Activated T-helper 2 cell treated with anti-CD3 and anti-CD28 coated beads, Interferon-gamma antibody, Interleukin-2, Interleukin-4, amounts not matched to agents 10 μg/mL and 5 μg/mL and 100 μg/mL, durations not matched to agents 14 hours and 24 hours and 36 hours (primary cell): ENCODE measurements at regions of chr10 and their contacts with region 1.

Region 1: GRCh38 chr10:100743626-100744135 is 1.7 kb upstream of the PAX2 start:
- DNase-seq: no peak
- H3K4me3 Mint-ChIP-seq: no peak overlapping the region
- H3K27ac Mint-ChIP-seq: peak overlapping the region; percentile 6
- H3K4me1 Mint-ChIP-seq: peaks cover 9% of the 10 kb centered on the region
- H3K27me3 Mint-ChIP-seq: peaks cover 80% of the 10 kb centered on the region

Region 2: GRCh38 chr10:100562008-100562711 is 181.5 kb before region 1 on chr10:
- intact Hi-C with region 1: loop called (anchors 1 kb)
- DNase-seq: peak; percentile 73
- H3K4me3 Mint-ChIP-seq: no peak overlapping the region
- H3K27ac Mint-ChIP-seq: no peak overlapping the region
- H3K4me1 Mint-ChIP-seq: peaks cover 12% of the 10 kb centered on the region
- H3K27me3 Mint-ChIP-seq: peaks cover 36% of the 10 kb centered on the region

Region 3: DNA sequence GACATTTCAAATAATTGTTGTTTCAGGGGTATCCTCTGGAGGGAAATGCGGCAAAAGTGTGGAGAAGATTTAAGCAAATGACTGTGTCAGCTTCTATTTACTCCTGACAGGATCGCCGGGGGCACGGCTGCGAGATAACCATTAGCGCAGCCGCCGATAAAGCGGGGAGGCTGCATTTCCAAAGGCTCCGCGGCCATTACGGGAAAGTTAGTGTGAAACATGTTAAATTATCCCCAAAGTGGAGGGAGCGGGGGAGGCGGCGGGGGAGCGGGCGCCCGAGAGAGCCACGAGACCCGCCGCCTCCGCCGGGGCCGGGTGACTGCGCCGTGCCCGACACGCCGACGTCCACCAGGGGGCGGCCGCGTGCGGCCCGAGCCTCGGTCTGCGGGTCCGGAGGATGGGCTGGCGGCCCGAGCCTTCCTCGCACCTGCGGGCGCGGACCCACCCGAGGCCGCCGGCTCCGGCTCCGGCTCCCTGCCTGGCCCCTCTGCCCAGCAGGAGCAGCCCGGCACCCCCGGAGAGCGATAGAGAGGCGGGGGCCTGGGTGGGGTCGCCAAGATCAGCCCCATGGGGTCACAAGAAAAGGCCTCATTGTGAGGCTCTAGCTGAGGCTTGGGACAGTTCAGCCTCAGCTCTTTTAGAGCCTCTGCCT is 72.7 kb before region 1 on chr10:
- intact Hi-C with region 1: loop called (anchors 5 kb)
- DNase-seq: peak; percentile 54
- H3K4me3 Mint-ChIP-seq: peak overlapping the region; percentile 39
- H3K27ac Mint-ChIP-seq: no peak overlapping the region
- H3K4me1 Mint-ChIP-seq: peaks cover 3% of the 10 kb centered on the region
- H3K27me3 Mint-ChIP-seq: peaks cover 49% of the 10 kb centered on the region

Region 4: DNA sequence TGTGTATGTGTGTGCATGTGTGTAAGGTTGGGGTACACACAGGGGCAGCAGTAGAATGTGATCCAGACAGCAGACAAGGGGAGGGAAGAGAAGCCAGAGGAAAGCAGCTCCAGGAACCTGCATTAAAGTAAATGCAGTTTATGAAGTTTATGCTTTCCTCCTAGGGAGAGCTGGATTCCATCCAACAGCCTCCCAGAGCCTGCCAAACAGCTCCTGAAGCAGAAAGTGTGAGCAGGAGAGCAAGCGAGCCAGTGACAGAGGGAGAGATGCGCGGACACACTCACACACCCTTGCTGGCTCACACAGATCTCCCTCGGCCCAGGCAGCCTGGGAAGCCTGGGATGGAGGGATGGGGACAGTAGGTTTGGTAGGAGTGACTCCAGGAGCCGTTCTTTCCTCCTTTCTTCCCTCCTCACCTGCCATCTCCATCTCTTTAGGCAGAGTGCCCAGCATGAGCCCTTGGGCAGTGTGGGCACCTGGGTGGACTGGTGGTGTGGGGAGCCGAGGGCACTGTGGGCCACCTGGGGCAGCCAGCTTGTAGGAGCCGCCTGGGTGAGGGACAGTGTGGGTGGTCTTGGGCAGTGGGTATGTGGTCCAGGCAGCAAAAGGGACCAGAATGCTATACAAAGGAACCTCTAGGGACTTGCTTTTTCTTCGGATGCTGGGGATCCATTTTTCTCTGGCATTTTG is 47.8 kb after region 1 on chr10:
- intact Hi-C with region 1: no loop called
- DNase-seq: no peak
- H3K4me3 Mint-ChIP-seq: no peak overlapping the region
- H3K27ac Mint-ChIP-seq: no peak overlapping the region
- H3K4me1 Mint-ChIP-seq: no peaks in the 10 kb centered on the region
- H3K27me3 Mint-ChIP-seq: peaks cover 57% of the 10 kb centered on the region

Region 5: DNA sequence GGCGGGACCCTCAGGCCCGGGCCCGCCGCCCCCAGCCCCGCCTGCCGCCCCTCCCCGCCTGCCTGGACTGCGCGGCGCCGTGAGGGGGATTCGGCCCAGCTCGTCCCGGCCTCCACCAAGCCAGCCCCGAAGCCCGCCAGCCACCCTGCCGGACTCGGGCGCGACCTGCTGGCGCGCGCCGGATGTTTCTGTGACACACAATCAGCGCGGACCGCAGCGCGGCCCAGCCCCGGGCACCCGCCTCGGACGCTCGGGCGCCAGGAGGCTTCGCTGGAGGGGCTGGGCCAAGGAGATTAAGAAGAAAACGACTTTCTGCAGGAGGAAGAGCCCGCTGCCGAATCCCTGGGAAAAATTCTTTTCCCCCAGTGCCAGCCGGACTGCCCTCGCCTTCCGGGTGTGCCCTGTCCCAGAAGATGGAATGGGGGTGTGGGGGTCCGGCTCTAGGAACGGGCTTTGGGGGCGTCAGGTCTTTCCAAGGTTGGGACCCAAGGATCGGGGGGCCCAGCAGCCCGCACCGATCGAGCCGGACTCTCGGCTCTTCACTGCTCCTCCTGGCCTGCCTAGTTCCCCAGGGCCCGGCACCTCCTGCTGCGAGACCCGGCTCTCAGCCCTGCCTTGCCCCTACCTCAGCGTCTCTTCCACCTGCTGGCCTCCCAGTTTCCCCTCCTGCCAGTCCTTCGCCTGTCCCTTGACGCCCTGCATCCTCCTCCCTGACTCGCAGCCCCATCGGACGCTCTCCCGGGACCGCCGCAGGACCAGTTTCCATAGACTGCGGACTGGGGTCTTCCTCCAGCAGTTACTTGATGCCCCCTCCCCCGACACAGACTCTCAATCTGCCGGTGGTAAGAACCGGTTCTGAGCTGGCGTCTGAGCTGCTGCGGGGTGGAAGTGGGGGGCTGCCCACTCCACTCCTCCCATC is 84.4 kb after region 1 on chr10:
- intact Hi-C with region 1: loop called (anchors 5 kb)
- DNase-seq: no peak
- H3K4me3 Mint-ChIP-seq: peak overlapping the region; percentile 75
- H3K27ac Mint-ChIP-seq: peak overlapping the region; percentile 5
- H3K4me1 Mint-ChIP-seq: peaks cover 21% of the 10 kb centered on the region
- H3K27me3 Mint-ChIP-seq: peaks cover 75% of the 10 kb centered on the region

Region 6: GRCh38 chr10:100979791-100980272 is 236.2 kb after region 1 on chr10:
- intact Hi-C with region 1: no loop called
- DNase-seq: no peak
- H3K4me3 Mint-ChIP-seq: no peak overlapping the region
- H3K27ac Mint-ChIP-seq: no peak overlapping the region
- H3K4me1 Mint-ChIP-seq: no peaks in the 10 kb centered on the region
- H3K27me3 Mint-ChIP-seq: no peaks in the 10 kb centered on the region

Region 7: DNA sequence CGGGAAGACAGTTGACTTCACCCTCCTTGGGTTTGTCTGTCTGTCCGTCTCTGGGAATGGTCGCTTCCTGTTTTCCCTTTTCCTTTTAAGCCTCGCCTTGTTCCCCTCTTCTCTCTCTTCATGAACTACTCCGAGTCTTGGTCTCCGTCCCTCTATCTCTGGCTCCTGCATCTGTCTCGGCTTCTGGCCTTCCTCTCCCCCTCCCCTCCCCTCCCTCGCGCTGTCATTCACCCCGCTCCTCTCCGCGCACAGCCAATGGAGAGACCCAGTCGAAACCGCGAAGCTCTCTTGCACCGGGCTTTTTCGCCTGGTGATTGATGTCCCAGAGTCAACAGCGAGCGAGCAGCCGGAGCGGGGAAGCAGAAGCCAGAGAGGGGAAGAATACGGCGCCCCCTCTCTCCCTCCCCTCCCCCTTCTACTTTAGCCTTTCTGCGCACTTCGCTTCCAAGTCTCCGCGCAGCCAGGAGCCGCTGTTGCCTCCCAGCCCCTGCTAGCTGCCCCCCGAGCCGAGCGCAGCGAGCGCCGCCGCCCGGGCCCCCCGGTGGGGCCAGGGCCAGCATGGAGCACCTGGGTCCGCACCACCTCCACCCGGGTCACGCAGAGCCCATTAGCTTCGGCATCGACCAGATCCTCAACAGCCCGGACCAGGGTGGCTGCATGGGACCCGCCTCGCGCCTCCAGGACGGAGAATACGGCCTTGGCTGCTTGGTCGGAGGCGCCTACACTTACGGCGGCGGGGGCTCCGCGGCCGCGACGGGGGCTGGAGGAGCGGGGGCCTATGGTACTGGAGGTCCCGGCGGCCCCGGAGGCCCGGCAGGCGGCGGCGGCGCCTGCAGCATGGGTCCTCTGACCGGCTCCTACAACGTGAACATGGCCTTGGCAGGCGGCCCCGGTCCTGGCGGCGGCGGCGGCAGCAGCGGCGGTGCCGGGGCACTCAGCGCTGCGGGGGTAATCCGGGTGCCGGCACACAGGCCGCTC is 387.6 kb after region 1 on chr10 and contains the start of gene TLX1:
- intact Hi-C with region 1: loop called (anchors 2 kb)
- DNase-seq: no peak
- H3K4me3 Mint-ChIP-seq: no peak within 1 kb of the TSS
- H3K27ac Mint-ChIP-seq: no peak within 1 kb of the TSS
- H3K4me1 Mint-ChIP-seq: peaks cover 6% of the 10 kb centered on the region
- H3K27me3 Mint-ChIP-seq: peaks cover 84% of the 10 kb centered on the region
- total RNA-seq, gene TLX1: not detected in 2 replicates

Region 8: DNA sequence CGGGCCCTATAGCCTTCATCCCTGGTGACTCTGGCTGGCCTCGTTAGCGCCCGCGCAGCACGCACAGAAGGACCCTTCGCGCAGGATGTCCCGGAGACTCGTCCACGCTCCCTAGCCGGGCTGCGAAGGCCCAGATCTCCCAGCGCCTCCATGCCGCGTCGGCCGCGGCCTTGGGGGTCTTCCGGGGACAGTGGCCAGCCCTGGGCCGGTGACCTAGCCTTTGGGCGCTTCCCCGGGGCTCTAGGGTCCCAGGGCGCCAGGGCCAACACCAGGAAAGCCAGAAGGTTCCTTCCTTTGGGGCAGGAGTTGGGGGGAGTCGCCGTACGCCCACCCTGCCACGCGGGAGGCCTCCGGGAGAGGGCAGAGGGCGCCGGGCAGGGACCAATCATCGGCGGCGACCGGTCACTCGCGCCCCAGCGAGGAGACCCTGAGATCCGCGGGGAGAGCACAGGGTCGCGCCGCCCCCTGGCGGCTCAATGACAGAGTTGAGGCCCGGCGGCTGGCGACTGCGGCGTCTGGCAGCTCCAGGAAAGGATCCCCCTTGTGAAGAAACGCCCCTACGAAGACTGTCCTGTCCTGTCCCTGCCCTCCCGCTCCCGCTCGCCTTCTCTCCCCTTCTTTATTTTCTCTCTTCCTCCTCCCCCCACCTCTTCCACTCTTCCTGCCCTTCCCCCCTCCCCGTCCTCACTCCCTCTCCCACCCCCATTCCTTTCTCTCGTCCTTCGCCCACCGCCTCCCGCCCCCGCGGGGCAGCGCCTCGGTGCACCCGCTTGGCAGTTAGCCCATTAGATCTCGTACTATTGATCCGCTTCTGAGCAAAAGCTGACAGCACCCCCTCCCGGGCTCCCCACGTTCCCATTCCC is 547.9 kb after region 1 on chr10:
- intact Hi-C with region 1: loop called (anchors 5 kb)
- DNase-seq: no peak
- H3K4me3 Mint-ChIP-seq: peak overlapping the region; percentile 58
- H3K27ac Mint-ChIP-seq: no peak overlapping the region
- H3K4me1 Mint-ChIP-seq: no peaks in the 10 kb centered on the region
- H3K27me3 Mint-ChIP-seq: peaks cover 66% of the 10 kb centered on the region